ENCODE measurements at regions of chr2 and their contacts with region 1.

Region 1: DNA sequence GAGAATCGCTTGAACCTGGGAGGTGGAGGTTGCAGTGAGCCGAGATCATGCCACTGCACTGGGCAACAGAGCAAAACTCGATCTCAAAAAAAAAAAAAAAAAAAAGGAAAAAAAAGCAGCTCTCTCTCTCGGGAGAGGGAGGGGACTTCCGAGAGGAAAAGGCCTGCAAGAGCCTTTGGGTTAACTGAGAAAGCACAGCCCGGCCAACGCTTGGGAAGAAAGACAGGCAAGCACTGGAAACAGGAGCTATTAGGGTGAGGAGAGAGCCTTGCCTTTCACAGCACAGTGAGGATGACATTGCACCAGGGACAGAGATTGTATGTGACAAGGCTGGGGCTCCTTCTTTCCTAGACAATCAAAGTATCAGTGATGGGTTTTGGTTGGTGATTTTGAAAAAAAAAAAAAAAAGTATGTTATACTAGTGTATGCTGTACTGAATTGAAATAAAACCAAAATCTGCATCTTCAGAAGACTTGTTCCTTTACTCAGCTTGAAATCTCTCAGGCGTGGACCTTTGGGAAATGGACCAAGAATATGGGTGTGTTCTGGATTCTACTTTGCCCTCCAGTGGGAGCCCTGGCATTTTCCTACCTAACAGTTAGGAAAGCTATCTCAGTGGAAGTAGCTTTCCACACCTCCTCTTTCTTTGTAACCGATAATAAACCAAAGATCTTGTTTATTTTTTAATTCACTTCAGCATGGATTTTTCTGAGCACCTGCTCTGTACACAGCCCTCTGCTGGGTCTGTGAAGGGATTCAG is 16.7 kb downstream of the SRSF7 start:
- DNase-seq: no peak
- H3K4me3 ChIP-seq: no peak overlapping the region
- H3K27ac ChIP-seq: peak overlapping the region; percentile 23 to 74 (median 72)
- H3K4me1 ChIP-seq: peaks cover 3 to 37% (median 9%) of the 10 kb centered on the region in 4 donors
- H3K27me3 ChIP-seq: no peaks in the 10 kb centered on the region
- CTCF ChIP-seq: no peak
- EP300 ChIP-seq: no peak
- POLR2A ChIP-seq: no peak

Region 2: DNA sequence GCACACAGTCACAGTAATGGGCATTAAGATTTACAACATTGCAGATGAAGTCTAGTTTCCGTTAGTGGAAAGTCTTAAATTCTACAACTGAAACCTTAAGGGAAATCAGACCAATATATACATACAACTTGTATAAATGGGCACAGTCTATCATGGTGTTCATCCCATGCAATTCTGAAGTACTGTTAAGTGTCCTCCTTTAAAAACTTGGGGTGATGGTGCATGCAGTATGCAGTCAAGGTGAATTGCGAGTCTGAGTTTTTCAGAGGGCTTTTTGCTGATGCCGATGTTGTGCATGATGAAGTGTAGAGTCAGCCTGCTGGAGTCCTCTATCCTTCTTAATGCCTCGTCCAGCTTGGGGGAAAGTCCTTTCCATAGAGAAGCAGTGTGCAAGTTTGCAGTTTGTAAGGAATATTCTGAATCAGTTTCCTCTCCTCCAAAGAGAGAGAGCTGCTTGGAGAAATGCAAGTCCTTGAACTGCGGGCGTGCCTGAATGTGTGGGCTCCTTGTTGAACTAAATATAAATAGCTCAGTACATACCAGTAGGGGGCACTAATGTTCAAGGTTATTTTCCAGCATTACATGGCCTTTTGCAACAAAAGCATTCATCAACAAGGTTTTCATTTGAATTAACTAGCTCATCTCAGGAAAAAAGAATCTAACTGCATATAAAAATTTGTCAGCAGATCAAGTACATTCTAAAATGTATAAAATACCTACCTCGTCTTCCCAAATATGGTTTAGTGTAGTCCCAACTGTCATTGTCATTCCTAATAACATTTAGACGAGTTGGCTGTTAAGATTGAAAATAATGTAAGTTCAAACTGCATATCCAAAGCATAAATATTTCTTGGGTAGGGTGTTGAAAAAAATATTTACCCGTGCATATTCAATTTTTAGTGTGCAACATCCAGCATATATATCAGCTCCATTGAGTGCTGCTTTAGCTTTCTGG is 153.0 kb before region 1 on chr2:
- in situ Hi-C with region 1: loop called in 2 of 4 experiments (anchors 10 kb)
- intact Hi-C with region 1: loop called (anchors 10 kb)
- DNase-seq: peak; percentile 36
- H3K4me3 ChIP-seq: no peak overlapping the region
- H3K27ac ChIP-seq: no peak overlapping the region
- H3K4me1 ChIP-seq: peaks cover 0 to 39% (median 11%) of the 10 kb centered on the region in 4 donors
- H3K27me3 ChIP-seq: no peaks in the 10 kb centered on the region
- CTCF ChIP-seq: peak; percentile 62 to 73 (median 65)
- EP300 ChIP-seq: no peak
- POLR2A ChIP-seq: no peak

Region 3: GRCh38 chr2:38590053-38590452 is 144.4 kb before region 1 on chr2:
- in situ Hi-C with region 1: loop called in 3 of 4 experiments (anchors 10 kb)
- intact Hi-C with region 1: loop called (anchors 10 kb)
- DNase-seq: no peak
- H3K4me3 ChIP-seq: no peak overlapping the region
- H3K27ac ChIP-seq: peak overlapping the region in 3 of 4 donors; percentile 14 to 98 (median 34)
- H3K4me1 ChIP-seq: peaks cover 3 to 67% (median 11%) of the 10 kb centered on the region in 4 donors
- H3K27me3 ChIP-seq: no peaks in the 10 kb centered on the region
- CTCF ChIP-seq: no peak
- EP300 ChIP-seq: no peak
- POLR2A ChIP-seq: no peak

Region 4: GRCh38 chr2:38665854-38666555 is 68.5 kb before region 1 on chr2 and contains the start of gene GALM:
- in situ Hi-C with region 1: no loop called
- intact Hi-C with region 1: loop called (anchors 10 kb)
- DNase-seq: peak; percentile 85
- H3K4me3 ChIP-seq: peak within 1 kb of the TSS; percentile 36 to 61 (median 48)
- H3K27ac ChIP-seq: peak within 1 kb of the TSS; percentile 84 to 95 (median 90)
- H3K4me1 ChIP-seq: peaks cover 0 to 42% (median 15%) of the 10 kb centered on the region in 4 donors
- H3K27me3 ChIP-seq: no peaks in the 10 kb centered on the region
- CTCF ChIP-seq: no peak
- EP300 ChIP-seq: no peak
- POLR2A ChIP-seq: peak; percentile 60
- total RNA-seq, gene GALM: 35.5 to 80.6 (median 70.9) TPM